ENCODE measurements at regions of chr10 and their contacts with region 1.

Region 1: DNA sequence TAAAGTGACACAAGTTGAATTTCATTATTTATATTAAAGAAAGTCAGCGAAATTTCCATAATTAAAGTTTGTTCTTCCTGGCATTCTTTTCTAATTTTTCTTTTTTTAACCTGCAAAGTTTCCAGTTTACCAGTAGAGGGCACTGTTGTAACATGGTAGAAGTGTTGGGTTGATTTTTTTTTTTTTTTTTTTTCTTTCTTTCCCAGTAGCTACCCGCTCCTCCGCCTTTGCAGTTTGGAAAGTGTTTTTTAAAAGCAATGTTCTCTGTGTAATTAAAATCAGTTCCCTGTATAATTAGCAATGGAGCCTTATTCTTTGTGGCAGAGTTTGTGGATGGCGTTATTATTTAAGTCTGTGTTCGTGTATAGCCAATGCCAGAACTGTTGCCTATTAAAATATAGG is 53.7 kb downstream of the TAF3 start:
- DNase-seq: peak; percentile 34 to 60 (median 52)
- H3K4me3 ChIP-seq: peak overlapping the region in 6 of 7 experiments; percentile 46 to 74 (median 66)
- H3K27ac ChIP-seq: no peak overlapping the region
- H3K4me1 ChIP-seq: no peaks in the 10 kb centered on the region
- H3K27me3 ChIP-seq: no peaks in the 10 kb centered on the region

Region 2: DNA sequence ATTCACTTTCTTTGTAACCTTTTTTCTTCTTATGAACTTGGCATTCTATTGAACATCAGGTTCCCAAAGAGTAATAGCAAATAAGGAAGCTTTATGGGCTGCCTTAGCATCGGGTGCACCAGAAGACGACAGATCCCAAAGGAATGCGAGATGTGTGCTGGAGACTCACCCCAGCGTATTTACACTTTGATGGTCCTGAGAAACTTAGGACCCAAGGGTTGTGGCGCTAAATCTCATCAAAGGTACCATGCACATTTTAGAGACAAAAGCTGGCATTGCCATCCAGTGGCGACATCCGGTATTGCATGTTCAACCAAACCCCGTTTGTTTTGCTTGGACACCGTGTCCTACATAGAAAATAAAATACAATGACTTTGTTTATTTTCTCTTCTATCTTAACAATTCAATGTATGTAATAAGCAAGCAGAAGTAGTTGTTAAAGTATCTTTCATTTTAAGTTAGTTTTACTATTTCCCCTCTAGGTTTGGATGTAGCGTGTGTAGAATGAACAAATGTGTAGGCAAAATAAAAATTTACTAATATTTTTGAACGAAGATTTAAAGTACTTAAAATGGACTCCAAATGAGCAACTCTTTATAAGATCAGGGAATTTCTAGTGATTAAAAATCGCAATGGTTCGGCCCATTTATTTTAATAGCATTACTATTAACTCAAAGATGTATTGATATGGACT is 1337.2 kb after region 1 on chr10:
- CTCF ChIA-PET with region 1: interaction called, 13 read pairs
- POLR2A ChIA-PET with region 1: no interaction called
- DNase-seq: peak; percentile 54 to 76 (median 64)
- H3K4me3 ChIP-seq: no peak overlapping the region
- H3K27ac ChIP-seq: no peak overlapping the region
- H3K4me1 ChIP-seq: no peaks in the 10 kb centered on the region
- H3K27me3 ChIP-seq: no peaks in the 10 kb centered on the region

Measured in common myeloid progenitor, CD34-positive (primary cell).